ENCODE measurements at regions of chr14 and their contacts with region 1.

Region 1: DNA sequence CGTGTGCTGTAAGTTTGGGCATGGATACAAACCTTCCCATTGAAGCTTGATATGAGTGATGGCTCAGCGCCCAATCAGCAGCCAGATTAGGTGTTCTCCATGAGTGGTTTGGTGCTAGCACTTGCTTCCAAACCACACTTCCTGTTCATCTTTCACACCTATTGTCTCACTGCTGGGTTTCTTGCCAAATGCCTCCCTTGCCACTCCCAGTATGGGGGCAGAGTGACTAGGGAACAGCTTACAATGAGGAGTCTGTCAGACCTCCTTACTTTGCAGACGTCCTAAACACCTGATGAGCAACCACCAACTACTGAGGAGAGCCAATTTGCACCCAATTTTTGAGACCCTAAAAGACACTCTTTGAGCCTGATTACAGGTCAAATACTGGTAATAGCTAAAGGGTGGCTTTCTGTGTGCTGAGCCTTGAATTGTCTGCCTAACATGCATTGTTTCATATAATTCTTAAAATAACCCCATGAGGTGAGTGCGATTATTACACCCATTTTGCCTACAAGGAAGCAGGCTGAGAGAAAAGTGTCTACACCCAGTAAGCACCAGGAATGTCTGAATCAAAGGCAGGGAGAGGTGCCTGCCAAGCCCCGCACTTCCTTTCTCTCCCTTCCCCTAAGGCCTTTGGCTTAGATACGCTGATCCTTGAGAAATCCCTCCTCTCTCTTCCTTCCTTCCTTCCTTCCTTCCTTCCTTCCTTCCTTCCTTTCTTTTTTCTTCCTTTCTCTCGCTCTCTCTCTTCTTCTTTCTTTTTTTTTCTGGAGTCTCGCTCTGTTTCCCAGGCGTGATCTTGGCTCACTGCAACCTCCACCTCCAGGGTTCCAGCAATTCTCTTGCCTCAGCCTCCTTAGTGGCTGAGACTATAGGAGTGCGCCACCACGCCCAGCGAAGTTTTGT is 48.2 kb upstream of the FOS start:
- DNase-seq: peak; percentile 17 to 84 (median 49)
- ATAC-seq: peak; percentile 66 to 83 (median 73)
- H3K4me3 ChIP-seq: no peak overlapping the region
- H3K4me3 Mint-ChIP-seq: peak overlapping the region in 1 of 3 donors; percentile 52
- H3K27ac ChIP-seq: peak overlapping the region; percentile 48
- H3K27ac Mint-ChIP-seq: peak overlapping the region; percentile 87 to 89
- H3K4me1 ChIP-seq: peaks cover 17 to 65% of the 10 kb centered on the region in 2 experiments
- H3K4me1 Mint-ChIP-seq: peaks cover 56 to 68% (median 63%) of the 10 kb centered on the region in 3 donors
- H3K27me3 ChIP-seq: peaks cover 0 to 3% of the 10 kb centered on the region in 2 experiments
- H3K27me3 Mint-ChIP-seq: no peaks in the 10 kb centered on the region

Region 2: DNA sequence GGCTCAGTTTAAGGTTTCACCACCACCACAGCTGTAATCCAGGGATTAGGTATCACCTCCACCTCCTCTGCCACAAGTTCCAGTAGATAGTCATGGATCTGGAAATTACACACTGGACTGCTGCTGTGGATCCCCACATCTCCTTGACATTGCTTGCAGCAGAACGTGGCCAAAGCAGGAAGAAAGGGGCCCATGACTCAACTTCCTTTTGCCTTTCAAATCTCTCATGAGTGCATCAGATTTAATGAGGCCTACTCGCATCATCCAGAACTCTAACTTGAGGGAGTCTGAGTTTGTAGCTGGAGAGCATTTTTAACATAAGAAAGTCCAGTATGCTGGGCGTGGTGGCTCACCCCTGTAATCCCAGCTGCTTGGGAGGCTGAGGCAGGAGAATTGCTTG is 24.8 kb before region 1 on chr14:
- CTCF ChIA-PET with region 1: no interaction called
- POLR2A ChIA-PET with region 1: no interaction called
- DNase-seq: no peak
- ATAC-seq: peak in 2 of 4 experiments; percentile 31 to 58
- H3K4me3 ChIP-seq: no peak overlapping the region
- H3K4me3 Mint-ChIP-seq: no peak overlapping the region
- H3K27ac ChIP-seq: no peak overlapping the region
- H3K27ac Mint-ChIP-seq: peak overlapping the region; percentile 7 to 75
- H3K4me1 ChIP-seq: peaks cover 3 to 5% of the 10 kb centered on the region in 2 experiments
- H3K4me1 Mint-ChIP-seq: peaks cover 6 to 15% (median 9%) of the 10 kb centered on the region in 3 donors
- H3K27me3 ChIP-seq: no peaks in the 10 kb centered on the region
- H3K27me3 Mint-ChIP-seq: no peaks in the 10 kb centered on the region

Region 3: DNA sequence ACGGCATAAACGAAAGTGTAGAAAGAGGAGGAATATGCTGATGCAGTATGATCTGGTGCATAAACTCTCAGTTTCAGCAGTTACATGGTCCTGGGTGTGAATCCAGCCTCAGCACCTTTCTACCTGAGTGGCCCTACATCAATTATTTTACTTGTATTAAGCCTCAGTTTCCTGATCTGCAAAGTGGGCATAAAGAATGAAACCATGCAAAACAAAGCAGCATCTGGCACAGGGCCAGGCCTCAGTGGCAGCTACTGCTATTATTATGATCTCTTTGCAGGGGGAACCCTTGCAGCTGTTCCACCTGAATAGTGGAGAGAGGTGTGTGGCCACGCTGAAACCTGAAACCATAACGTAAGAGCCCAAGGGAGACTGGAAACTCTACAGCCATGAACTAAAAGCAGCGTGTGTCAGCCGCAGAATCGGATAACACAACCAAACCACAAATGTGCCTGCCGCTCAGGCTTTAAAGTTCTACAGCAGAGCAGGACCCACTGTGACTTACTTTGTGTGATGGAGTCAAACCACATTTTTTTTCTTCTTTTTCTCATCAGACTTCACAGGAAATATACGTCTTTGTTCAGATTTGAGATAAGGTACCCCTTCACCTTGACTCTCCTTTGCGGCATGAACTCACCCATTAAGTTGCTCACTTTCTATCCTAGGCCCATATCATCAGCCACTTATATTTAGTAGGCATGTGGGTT is 19.0 kb after region 1 on chr14:
- CTCF ChIA-PET with region 1: interaction called in 1 of 2 experiments, 32 read pairs
- POLR2A ChIA-PET with region 1: interaction called, 4 to 6 read pairs
- DNase-seq: peak; percentile 47 to 96 (median 85)
- ATAC-seq: peak; percentile 80 to 89 (median 88)
- H3K4me3 ChIP-seq: peak overlapping the region; percentile 20 to 29
- H3K4me3 Mint-ChIP-seq: peak overlapping the region; percentile 43 to 72 (median 44)
- H3K27ac ChIP-seq: peak overlapping the region; percentile 90
- H3K27ac Mint-ChIP-seq: peak overlapping the region; percentile 85 to 88
- H3K4me1 ChIP-seq: peaks cover 45 to 64% of the 10 kb centered on the region in 2 experiments
- H3K4me1 Mint-ChIP-seq: peaks cover 59 to 68% (median 66%) of the 10 kb centered on the region in 3 donors
- H3K27me3 ChIP-seq: peaks cover 0 to 2% of the 10 kb centered on the region in 2 experiments
- H3K27me3 Mint-ChIP-seq: no peaks in the 10 kb centered on the region

Region 4: GRCh38 chr14:75258615-75259466 is 28.4 kb after region 1 on chr14:
- CTCF ChIA-PET with region 1: interaction called in 1 of 2 experiments, 8 read pairs
- POLR2A ChIA-PET with region 1: interaction called, 3 to 21 read pairs
- DNase-seq: peak; percentile 92 to 100 (median 100)
- ATAC-seq: peak; percentile 91 to 98 (median 96)
- H3K4me3 ChIP-seq: peak overlapping the region; percentile 38 to 47
- H3K4me3 Mint-ChIP-seq: peak overlapping the region; percentile 85 to 87 (median 87)
- H3K27ac ChIP-seq: peak overlapping the region; percentile 95
- H3K27ac Mint-ChIP-seq: peak overlapping the region; percentile 98 to 100
- H3K4me1 ChIP-seq: peaks cover 9 to 23% of the 10 kb centered on the region in 2 experiments
- H3K4me1 Mint-ChIP-seq: peaks cover 29 to 45% (median 38%) of the 10 kb centered on the region in 3 donors
- H3K27me3 ChIP-seq: peaks cover 0 to 8% of the 10 kb centered on the region in 2 experiments
- H3K27me3 Mint-ChIP-seq: no peaks in the 10 kb centered on the region

Region 5: GRCh38 chr14:75278422-75279161 is 48.2 kb after region 1 on chr14 and contains the start of gene FOS:
- CTCF ChIA-PET with region 1: interaction called in 1 of 2 experiments, 5 read pairs
- POLR2A ChIA-PET with region 1: interaction called in 1 of 2 experiments, 17 read pairs
- DNase-seq: peak; percentile 77 to 97 (median 91)
- ATAC-seq: peak; percentile 76 to 88 (median 87)
- H3K4me3 ChIP-seq: peak within 1 kb of the TSS; percentile 77 to 94
- H3K4me3 Mint-ChIP-seq: peak within 1 kb of the TSS; percentile 83 to 95 (median 92)
- H3K27ac ChIP-seq: peak within 1 kb of the TSS; percentile 68
- H3K27ac Mint-ChIP-seq: peak within 1 kb of the TSS; percentile 86 to 96
- H3K4me1 ChIP-seq: peaks cover 26 to 61% of the 10 kb centered on the region in 2 experiments
- H3K4me1 Mint-ChIP-seq: peaks cover 57 to 83% (median 77%) of the 10 kb centered on the region in 3 donors
- H3K27me3 ChIP-seq: peaks cover 0 to 50% of the 10 kb centered on the region in 2 experiments
- H3K27me3 Mint-ChIP-seq: peaks cover 8 to 15% of the 10 kb centered on the region in 2 donors
- total RNA-seq, gene FOS: 20.4 to 2,951 (median 27.1) TPM

Region 6: DNA sequence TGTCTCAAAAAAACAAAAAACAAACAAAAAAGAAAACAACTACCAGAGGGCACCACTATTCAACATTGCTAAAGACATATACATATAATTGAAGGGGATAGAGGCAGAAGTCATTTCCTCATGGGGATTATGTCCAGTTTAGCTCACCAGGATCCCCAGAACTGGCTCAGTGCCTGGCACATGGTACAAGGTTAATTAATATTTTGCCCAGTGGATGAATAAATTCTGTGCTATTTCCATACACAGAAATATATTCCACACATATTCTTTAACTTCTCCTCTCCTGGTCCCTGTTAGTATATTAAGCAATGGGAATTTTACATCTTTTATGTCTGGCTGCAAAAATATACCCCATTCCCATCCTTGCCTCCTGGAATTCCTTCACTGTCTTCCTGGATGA is 54.9 kb after region 1 on chr14:
- CTCF ChIA-PET with region 1: interaction called in 1 of 2 experiments, 5 read pairs
- POLR2A ChIA-PET with region 1: interaction called, 13 to 17 read pairs
- DNase-seq: no peak
- ATAC-seq: no peak
- H3K4me3 ChIP-seq: no peak overlapping the region
- H3K4me3 Mint-ChIP-seq: no peak overlapping the region
- H3K27ac ChIP-seq: no peak overlapping the region
- H3K27ac Mint-ChIP-seq: no peak overlapping the region
- H3K4me1 ChIP-seq: peaks cover under 1 to 6% of the 10 kb centered on the region in 2 experiments
- H3K4me1 Mint-ChIP-seq: peaks cover 15 to 29% (median 28%) of the 10 kb centered on the region in 3 donors
- H3K27me3 ChIP-seq: peaks cover 0 to 20% of the 10 kb centered on the region in 2 experiments
- H3K27me3 Mint-ChIP-seq: peaks cover 2 to 3% of the 10 kb centered on the region in 2 donors

Region 7: DNA sequence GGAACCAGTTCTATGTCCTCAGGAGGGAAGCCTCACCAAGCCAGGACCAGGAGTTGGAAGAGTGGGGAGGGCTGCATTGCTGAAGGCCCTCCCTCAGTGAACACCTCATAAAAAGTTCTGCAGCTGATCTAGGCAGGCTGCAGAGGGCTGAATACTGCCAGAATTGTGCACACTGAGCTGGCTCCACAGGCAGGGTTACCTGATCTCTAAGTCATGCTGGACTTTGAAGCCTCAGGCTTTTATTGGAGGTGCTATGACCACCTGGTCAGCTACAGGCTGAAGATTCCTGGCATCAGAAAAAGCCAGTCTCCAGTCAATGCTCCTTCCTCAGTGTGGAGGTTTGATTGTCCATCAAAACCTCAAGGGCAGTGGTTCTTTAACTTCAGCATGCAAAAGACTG is 88.0 kb after region 1 on chr14:
- CTCF ChIA-PET with region 1: no interaction called
- POLR2A ChIA-PET with region 1: no interaction called
- DNase-seq: no peak
- ATAC-seq: no peak
- H3K4me3 ChIP-seq: no peak overlapping the region
- H3K4me3 Mint-ChIP-seq: no peak overlapping the region
- H3K27ac ChIP-seq: no peak overlapping the region
- H3K27ac Mint-ChIP-seq: no peak overlapping the region
- H3K4me1 ChIP-seq: no peaks in the 10 kb centered on the region
- H3K4me1 Mint-ChIP-seq: no peaks in the 10 kb centered on the region
- H3K27me3 ChIP-seq: peaks cover 0 to 19% of the 10 kb centered on the region in 2 experiments
- H3K27me3 Mint-ChIP-seq: peaks cover 3 to 4% of the 10 kb centered on the region in 2 donors

Region 8: GRCh38 chr14:75549169-75549568 is 318.8 kb after region 1 on chr14:
- CTCF ChIA-PET with region 1: no interaction called
- POLR2A ChIA-PET with region 1: no interaction called
- DNase-seq: no peak
- ATAC-seq: peak in 1 of 4 experiments; percentile 32
- H3K4me3 ChIP-seq: no peak overlapping the region
- H3K4me3 Mint-ChIP-seq: peak overlapping the region in 1 of 3 donors; percentile 6
- H3K27ac ChIP-seq: no peak overlapping the region
- H3K27ac Mint-ChIP-seq: peak overlapping the region; percentile 77 to 87
- H3K4me1 ChIP-seq: peaks cover 0 to 41% of the 10 kb centered on the region in 2 experiments
- H3K4me1 Mint-ChIP-seq: peaks cover 7 to 43% (median 26%) of the 10 kb centered on the region in 3 donors
- H3K27me3 ChIP-seq: no peaks in the 10 kb centered on the region
- H3K27me3 Mint-ChIP-seq: no peaks in the 10 kb centered on the region

Region 9: DNA sequence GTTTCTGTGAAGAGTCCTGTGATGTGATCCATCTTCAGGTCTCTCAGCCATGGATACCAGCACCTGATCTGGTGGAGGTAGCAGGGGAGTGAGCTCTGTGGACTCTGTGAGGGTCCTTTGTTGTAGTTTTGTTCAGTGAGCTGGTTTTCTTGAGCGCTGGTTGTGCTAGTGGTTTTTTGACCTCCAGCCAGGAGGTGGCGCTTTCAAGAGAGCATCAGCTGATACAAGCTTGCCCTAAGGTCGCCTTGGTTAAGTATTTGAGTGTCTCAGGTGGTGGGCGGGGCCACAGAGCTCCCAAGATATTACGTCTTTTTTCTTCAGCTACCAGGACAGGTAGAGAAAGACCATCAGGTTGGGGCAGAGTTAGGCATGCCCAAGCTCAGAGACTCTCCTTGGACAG is 570.4 kb after region 1 on chr14:
- CTCF ChIA-PET with region 1: no interaction called
- POLR2A ChIA-PET with region 1: no interaction called
- DNase-seq: no peak
- ATAC-seq: no peak
- H3K4me3 ChIP-seq: no peak overlapping the region
- H3K4me3 Mint-ChIP-seq: no peak overlapping the region
- H3K27ac ChIP-seq: no peak overlapping the region
- H3K27ac Mint-ChIP-seq: no peak overlapping the region
- H3K4me1 ChIP-seq: no peaks in the 10 kb centered on the region
- H3K4me1 Mint-ChIP-seq: no peaks in the 10 kb centered on the region
- H3K27me3 ChIP-seq: no peaks in the 10 kb centered on the region
- H3K27me3 Mint-ChIP-seq: no peaks in the 10 kb centered on the region

Measured in T-cell (primary cell).